HepG2 (cell line): ENCODE measurements at regions of chr12 and their contacts with region 1.

Region 1: DNA sequence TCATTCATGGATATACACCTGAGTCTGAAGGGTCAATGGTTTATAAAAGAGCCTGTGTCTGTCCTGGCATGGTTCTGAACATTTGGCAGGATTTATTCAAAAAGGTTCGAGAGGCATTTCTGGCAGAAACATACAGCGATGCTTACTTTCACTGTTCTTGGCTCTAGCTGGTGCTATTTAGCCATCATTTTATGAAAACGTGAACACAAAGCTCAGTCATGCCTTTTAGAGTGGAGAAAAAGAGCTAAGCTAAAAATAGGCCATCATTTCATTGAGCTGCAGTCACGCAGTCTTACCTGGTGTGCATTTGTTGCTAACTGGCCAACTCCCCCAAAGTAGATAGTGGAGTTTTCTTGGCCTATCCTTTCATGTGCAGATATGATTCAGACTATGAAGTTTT is 1209.5 kb downstream of the SLC16A7 start:
- DNase-seq: no peak
- ATAC-seq: no peak
- H3K4me3 ChIP-seq: no peak overlapping the region
- H3K27ac ChIP-seq: no peak overlapping the region
- H3K4me1 ChIP-seq: no peaks in the 10 kb centered on the region
- H3K27me3 ChIP-seq: no peaks in the 10 kb centered on the region
- CTCF ChIP-seq: no peak
- EP300 ChIP-seq: no peak
- POLR2A ChIP-seq: no peak
- RAD21 ChIP-seq: no peak

Region 2: GRCh38 chr12:60830381-60830780 is 25.0 kb after region 1 on chr12:
- CTCF ChIA-PET with region 1: no interaction called
- POLR2A ChIA-PET with region 1: no interaction called
- in situ Hi-C with region 1: no loop called
- intact Hi-C with region 1: no loop called
- DNase-seq: no peak
- ATAC-seq: no peak
- H3K4me3 ChIP-seq: no peak overlapping the region
- H3K27ac ChIP-seq: no peak overlapping the region
- H3K4me1 ChIP-seq: no peaks in the 10 kb centered on the region
- H3K27me3 ChIP-seq: no peaks in the 10 kb centered on the region
- CTCF ChIP-seq: no peak
- EP300 ChIP-seq: no peak
- POLR2A ChIP-seq: no peak
- RAD21 ChIP-seq: no peak

Region 3: DNA sequence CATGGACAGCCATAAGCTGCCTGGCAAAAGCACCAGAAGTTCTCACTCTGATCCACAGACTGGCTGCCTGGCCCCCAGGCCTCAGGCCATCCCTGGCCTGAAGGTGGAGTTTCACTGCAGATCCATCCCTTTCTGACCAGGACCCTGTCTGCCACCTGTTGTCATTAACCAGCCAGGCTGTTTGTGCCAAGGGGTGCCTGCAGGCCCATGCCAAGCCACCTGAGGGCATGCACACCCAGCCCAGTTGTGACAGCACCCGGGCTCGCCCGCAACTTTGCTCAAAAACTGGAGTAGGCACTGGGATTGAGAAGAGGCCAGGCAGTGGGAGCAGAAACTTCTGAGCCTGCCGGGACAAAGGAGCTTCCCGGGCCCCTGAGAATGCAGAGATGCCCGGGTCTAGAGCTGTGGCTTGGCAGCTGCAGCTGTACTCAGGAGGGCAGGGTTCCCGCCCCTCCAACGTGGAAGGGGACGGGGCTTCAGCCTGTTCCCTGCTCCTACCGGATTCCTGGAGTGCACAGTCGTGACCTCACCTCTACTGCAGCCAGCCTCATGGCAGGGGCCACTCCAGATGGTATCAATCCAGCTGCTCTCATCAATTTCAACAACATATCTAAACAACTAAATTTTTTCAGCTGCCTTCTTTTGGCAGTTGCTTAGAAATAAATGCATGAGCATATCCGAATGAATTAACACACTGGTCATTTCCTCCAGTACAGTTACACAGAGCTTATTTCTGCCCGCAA is 67.8 kb after region 1 on chr12:
- CTCF ChIA-PET with region 1: no interaction called
- POLR2A ChIA-PET with region 1: no interaction called
- in situ Hi-C with region 1: no loop called
- intact Hi-C with region 1: loop called (anchors 2 kb)
- DNase-seq: no peak
- ATAC-seq: no peak; the same call in 2 of the 3 replicates
- H3K4me3 ChIP-seq: no peak overlapping the region
- H3K27ac ChIP-seq: no peak overlapping the region
- H3K4me1 ChIP-seq: no peaks in the 10 kb centered on the region
- H3K27me3 ChIP-seq: no peaks in the 10 kb centered on the region
- CTCF ChIP-seq: no peak
- EP300 ChIP-seq: no peak
- POLR2A ChIP-seq: no peak
- RAD21 ChIP-seq: no peak